A549 (cell line): ENCODE measurements at regions of chr3 and their contacts with region 1.

Region 1: GRCh38 chr3:143016321-143016972 is 15.1 kb downstream of the U2SURP start:
- DNase-seq: no peak
- ATAC-seq: no peak
- H3K4me3 ChIP-seq: no peak overlapping the region
- H3K27ac ChIP-seq: no peak overlapping the region
- H3K4me1 ChIP-seq: no peaks in the 10 kb centered on the region
- CTCF ChIP-seq: peak; percentile 53
- EP300 ChIP-seq: no peak
- POLR2A ChIP-seq: no peak
- RAD21 ChIP-seq: peak; percentile 28 to 34; a peak in 1 of 5 replicates

Region 2: DNA sequence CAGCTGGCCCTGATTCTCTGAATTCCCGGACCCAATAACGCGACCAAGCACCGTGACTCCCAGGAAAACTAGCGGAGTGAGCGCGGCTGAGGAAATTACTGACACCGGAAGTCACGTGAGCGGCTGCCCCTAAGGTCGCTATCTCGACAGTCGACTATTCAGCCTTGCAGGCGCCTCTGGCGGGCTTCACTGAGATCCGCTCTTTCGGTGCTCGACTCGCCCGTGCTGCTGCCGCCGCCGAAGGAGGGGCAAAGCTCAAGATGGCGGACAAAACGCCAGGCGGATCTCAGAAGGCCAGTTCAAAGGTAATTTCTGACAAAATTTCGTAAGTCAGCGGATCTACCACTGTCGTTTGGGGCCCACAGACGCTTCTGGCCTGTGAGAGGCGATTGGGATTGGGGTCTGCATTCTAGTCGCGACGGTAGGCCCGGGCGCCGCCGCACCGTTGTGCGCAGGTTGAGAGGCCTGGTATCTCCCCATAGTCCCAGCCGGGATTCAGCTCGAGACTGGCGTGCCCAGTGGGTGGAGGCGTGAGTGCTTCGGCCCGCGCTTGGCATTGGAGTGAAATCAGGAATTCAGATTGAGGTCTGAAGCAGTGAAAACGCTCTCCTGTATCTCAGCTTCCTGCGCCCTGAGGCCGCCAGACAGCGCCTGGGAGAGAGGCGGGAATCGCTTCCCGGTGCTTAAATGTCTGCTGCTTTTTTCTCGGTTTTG is 14.9 kb before region 1 on chr3 and contains the start of gene U2SURP:
- CTCF ChIA-PET with region 1: interaction called, 6 read pairs
- POLR2A ChIA-PET with region 1: interaction called, 17 read pairs
- DNase-seq: peak; percentile 93 to 98
- ATAC-seq: peak; percentile 89 to 92
- H3K4me3 ChIP-seq: peak within 1 kb of the TSS; percentile 93
- H3K27ac ChIP-seq: peak within 1 kb of the TSS; percentile 91 to 96
- H3K4me1 ChIP-seq: peaks cover 44% of the 10 kb centered on the region
- CTCF ChIP-seq: no peak
- EP300 ChIP-seq: no peak; a peak in 1 of 5 replicates
- POLR2A ChIP-seq: peak; percentile 85
- RAD21 ChIP-seq: no peak
- polyA plus RNA-seq, gene U2SURP: 109 and 166 TPM in 2 replicates

Region 3: DNA sequence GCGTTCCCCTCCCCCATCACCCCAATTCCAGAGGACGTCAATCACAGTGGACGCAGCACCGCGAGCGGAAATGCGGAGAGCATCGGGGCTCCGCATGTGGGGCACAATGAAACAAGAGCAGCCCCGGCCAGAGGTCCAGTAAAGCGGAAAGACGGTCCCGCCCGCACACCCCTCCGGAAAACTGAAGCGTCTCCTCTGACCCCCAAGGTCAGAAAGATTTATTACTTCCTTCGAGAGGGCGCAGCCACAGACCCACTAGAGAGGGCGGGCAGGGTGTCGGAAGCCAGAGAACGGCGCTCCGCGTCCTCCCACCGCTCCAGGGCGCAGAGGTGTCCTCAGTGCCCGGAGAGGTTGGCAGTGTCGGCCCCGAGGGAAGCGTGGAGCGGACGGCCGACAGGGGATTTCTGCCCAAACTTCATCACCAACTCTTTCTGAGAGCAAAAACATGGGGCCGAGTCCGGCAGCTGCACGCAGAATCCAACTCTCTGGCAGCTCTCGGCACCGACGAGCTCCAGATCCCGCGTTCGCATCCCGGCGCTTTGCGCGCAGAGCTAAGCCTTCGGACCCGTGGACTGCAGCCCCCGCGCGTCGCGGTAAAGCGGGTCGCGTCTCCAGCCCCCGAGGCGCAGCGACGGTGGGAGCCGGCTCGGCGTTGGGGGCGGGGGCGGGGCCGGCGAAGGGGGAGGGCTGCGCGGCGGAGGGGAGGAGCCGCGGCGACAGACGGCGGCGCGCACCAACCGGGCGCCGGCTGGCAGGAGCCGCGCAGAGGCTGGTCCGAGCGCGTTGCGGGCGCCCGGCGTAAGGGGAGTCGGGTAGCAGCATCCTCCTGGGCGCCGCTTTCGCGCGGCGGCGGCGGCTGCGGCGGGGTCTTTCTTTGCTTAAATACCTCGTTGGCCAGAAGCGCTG is 102.8 kb after region 1 on chr3 and contains the start of gene CHST2:
- CTCF ChIA-PET with region 1: no interaction called
- POLR2A ChIA-PET with region 1: no interaction called
- DNase-seq: peak; percentile 64 to 85
- ATAC-seq: peak; percentile 89 to 95
- H3K4me3 ChIP-seq: peak within 1 kb of the TSS; percentile 70
- H3K27ac ChIP-seq: peak within 1 kb of the TSS; percentile 48 to 76; a peak in 4 of 6 replicates
- H3K4me1 ChIP-seq: peaks cover 5% of the 10 kb centered on the region; the same call in 2 of the 3 replicates
- CTCF ChIP-seq: no peak
- EP300 ChIP-seq: no peak
- POLR2A ChIP-seq: no peak
- RAD21 ChIP-seq: no peak
- polyA plus RNA-seq, gene CHST2: 0.04 and 0.08 TPM in 2 replicates

Region 4: DNA sequence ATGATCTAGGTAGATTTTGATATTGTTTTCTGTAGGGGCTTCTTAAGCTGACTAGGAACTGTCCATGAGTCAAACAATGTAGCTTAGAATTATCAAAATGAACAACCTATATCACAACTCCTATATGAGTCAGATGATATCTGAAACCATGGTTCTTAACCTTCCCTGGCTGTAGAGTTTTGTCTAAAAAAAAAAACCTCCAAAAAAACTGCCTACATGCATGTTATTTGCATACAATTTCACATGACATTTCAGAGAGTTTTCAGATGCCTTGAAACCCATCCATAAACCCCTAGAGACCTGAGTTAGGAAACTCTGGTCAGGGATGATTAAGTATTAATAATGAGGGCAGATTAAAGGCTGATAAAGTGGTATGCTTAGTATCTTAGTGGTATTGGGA is 260.1 kb after region 1 on chr3:
- CTCF ChIA-PET with region 1: no interaction called
- POLR2A ChIA-PET with region 1: no interaction called
- DNase-seq: no peak
- ATAC-seq: no peak
- H3K4me3 ChIP-seq: no peak overlapping the region
- H3K27ac ChIP-seq: no peak overlapping the region
- H3K4me1 ChIP-seq: no peaks in the 10 kb centered on the region
- CTCF ChIP-seq: no peak
- EP300 ChIP-seq: no peak
- POLR2A ChIP-seq: no peak
- RAD21 ChIP-seq: no peak